ENCODE measurements at regions of chr10 and their contacts with region 1.

Region 1: DNA sequence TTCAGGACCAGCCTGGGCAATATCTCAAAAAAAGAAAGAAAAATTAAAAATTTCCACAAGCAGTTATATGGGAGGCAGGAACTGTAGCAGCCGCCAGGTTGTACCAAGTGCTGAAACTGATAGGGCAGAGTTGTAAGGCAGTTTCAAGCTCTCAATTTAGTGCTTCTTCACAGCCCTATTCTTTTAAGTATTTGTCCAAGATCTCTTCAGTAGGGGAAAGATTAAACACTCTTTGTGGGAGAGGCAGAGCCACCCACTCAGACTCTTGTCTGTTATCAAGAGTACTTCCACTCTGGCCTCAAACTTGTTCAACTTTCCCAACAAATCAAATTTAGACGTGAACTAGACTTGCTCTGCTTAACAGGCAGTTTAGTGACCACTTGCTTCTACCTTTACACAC is 228.7 kb downstream of the REEP3 start:
- DNase-seq: no peak
- ATAC-seq: no peak
- H3K4me3 ChIP-seq: no peak overlapping the region
- H3K27ac ChIP-seq: no peak overlapping the region
- H3K4me1 ChIP-seq: no peaks in the 10 kb centered on the region
- H3K27me3 ChIP-seq: no peaks in the 10 kb centered on the region
- CTCF ChIP-seq: no peak
- POLR2A ChIP-seq: no peak

Region 2: DNA sequence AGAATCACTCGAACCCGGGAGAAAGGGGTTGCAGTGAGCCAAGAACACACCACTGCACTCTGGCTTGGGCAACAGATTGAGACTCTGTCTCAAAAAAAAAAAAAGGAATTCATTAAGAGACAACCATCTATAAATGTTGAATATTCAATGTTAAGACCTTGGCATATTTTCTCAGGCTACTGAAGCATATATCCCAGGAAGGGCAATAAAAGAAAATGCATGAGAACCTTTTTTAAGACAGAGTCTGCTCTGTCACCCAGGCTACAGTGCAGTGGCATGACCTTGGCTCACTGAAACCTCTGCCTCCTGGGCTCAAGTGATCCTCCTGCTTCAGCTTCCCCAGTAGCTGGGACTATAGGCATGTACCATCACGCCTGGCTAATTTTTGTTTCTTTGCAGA is 449.1 kb before region 1 on chr10:
- in situ Hi-C with region 1: no loop called
- intact Hi-C with region 1: loop called (anchors 5 kb)
- DNase-seq: no peak
- ATAC-seq: no peak
- H3K4me3 ChIP-seq: no peak overlapping the region
- H3K27ac ChIP-seq: no peak overlapping the region
- H3K4me1 ChIP-seq: peaks cover 0 to 11% of the 10 kb centered on the region in 2 donors
- H3K27me3 ChIP-seq: no peaks in the 10 kb centered on the region
- CTCF ChIP-seq: no peak
- POLR2A ChIP-seq: no peak